GM12878 (cell line): ENCODE measurements at regions of chr2 and their contacts with region 1.

Region 1: DNA sequence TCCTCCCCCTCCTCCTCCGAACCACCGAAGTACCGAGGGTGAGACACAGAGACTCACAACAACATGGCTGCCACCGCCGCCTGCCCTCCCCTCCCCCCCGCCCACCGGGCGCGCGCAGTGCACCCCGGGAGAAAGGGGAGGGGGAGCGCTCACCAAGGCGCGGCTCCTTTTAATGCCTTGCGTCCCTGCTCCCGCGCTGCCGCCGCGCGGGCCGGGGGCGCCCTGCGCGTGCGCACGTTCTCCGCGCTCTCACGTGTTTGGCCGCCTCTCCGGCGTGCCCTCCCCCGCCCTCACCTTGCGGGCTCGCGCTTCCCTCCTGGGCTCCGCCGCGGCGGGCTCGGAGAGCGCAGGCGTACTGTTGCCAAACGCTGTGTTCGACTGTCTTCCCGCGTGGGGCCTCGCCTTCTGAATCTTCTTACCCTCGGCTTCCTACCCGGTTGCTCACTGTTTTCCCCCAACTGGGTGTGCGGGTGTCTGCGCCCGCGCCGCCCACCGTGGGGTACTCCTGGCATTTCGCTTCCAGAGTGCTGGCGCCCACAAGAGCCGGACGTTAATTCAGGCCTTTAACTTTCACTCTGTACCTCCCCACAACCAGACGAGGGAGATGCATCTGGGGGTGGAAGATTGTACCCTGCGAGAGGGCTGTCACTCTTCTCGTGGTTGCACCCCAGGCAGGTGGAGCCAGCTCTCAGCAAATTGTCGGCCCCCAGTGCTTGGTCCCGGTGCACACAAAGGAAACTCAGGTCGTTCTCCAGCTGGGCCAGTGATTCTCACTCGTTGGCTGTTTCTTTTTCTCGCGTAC is at the start of gene PUM2:
- DNase-seq: peak; percentile 92
- ATAC-seq: peak; percentile 86
- H3K4me3 ChIP-seq: peak within 1 kb of the TSS; percentile 77
- H3K27ac ChIP-seq: peak within 1 kb of the TSS; percentile 98
- H3K4me1 ChIP-seq: peaks cover 15% of the 10 kb centered on the region
- H3K27me3 ChIP-seq: no peaks in the 10 kb centered on the region
- CTCF ChIP-seq: no peak
- EP300 ChIP-seq: no peak
- POLR2A ChIP-seq: peak; percentile 94
- RAD21 ChIP-seq: 0 out of 2 replicates have a peak, but pooled peaks have one; percentile 0
- polyA plus RNA-seq, gene PUM2: 14.5 to 17.8 TPM

Region 2: DNA sequence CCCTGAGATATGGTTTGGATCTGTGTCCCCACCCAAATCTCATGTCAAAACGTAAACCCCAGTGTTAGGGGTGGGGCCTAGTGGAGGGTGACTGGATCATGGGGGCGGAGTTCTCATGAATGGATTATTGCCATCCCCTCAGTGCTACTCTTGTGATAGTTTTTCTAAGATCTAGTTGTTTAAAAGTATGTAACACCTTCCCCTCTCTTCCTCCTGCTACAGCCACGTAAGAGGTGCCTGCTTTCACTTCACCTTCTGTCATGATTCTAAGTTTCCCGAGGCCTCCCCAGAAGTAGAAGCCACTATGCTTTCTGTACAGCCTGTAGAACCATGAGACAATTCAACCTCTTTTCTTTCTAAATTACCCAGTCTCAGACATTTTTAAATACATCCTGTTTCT is 17.2 kb before region 1 on chr2:
- CTCF ChIA-PET with region 1: interaction called, 74 read pairs
- POLR2A ChIA-PET with region 1: interaction called, 24 read pairs
- RAD21 ChIA-PET with region 1: interaction called, 5 read pairs
- SMC1A ChIA-PET with region 1: interaction called, 31 read pairs
- in situ Hi-C with region 1: no loop called
- intact Hi-C with region 1: no loop called
- DNase-seq: no peak
- ATAC-seq: peak; percentile 51
- H3K4me3 ChIP-seq: no peak overlapping the region
- H3K27ac ChIP-seq: no peak overlapping the region
- H3K4me1 ChIP-seq: peaks cover 12% of the 10 kb centered on the region; the same call in 1 of the 2 replicates
- H3K27me3 ChIP-seq: no peaks in the 10 kb centered on the region
- CTCF ChIP-seq: no peak
- EP300 ChIP-seq: no peak
- POLR2A ChIP-seq: no peak
- RAD21 ChIP-seq: no peak

Region 3: DNA sequence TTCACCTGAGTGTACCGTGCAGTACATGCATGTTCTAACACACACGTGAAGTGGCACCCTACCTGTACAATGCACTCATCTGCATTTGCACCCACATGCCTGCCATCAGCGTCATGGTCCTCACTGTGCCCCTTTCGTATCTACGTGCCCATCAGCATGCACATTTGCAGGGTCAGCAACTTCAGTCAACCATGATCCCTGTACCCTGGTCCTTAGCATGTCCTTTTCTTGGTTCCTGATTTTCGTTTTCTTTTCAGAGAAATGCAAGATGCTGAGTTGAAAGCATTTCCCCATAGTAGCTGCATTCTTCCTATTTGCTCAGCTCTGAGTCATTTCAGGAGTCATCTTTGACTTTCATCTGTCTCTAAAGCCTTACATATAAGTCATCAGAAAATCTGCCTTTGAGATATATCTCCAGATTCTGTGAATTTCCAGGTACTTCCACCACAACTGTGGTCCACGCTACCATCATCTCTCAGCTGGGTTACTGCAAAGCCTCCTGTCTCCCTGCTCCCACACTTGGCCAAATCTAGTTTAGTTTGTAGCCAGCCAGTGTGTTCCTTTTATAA is 14.4 kb after region 1 on chr2:
- CTCF ChIA-PET with region 1: no interaction called
- POLR2A ChIA-PET with region 1: interaction called, 11 read pairs
- RAD21 ChIA-PET with region 1: interaction called, 3 read pairs
- SMC1A ChIA-PET with region 1: interaction called, 4 read pairs
- in situ Hi-C with region 1: no loop called
- intact Hi-C with region 1: loop called (anchors 2 kb)
- DNase-seq: peak; percentile 95
- ATAC-seq: peak; percentile 91
- H3K4me3 ChIP-seq: peak overlapping the region; percentile 42; the same call in 1 of the 2 replicates
- H3K27ac ChIP-seq: peak overlapping the region; percentile 81
- H3K4me1 ChIP-seq: peaks cover 28% of the 10 kb centered on the region
- H3K27me3 ChIP-seq: no peaks in the 10 kb centered on the region
- CTCF ChIP-seq: no peak
- EP300 ChIP-seq: peak; percentile 25 to 51; a peak in 1 of 4 replicates
- POLR2A ChIP-seq: no peak
- RAD21 ChIP-seq: no peak